Ovary (tissue), 10 donors: ENCODE measurements at regions of chr6 and their contacts with region 1.

Region 1: GRCh38 chr6:134640975-134641429 is 308.9 kb downstream of the ALDH8A1 start:
- DNase-seq: peak; percentile 66 to 87 (median 77)
- H3K4me3 ChIP-seq: no peak overlapping the region
- H3K27ac ChIP-seq: no peak overlapping the region
- H3K4me1 ChIP-seq: peaks cover 3% of the 10 kb centered on the region
- H3K27me3 ChIP-seq: no peaks in the 10 kb centered on the region
- CTCF ChIP-seq: peak; percentile 73 to 93 (median 84)
- EP300 ChIP-seq: no peak
- POLR2A ChIP-seq: no peak

Region 2: DNA sequence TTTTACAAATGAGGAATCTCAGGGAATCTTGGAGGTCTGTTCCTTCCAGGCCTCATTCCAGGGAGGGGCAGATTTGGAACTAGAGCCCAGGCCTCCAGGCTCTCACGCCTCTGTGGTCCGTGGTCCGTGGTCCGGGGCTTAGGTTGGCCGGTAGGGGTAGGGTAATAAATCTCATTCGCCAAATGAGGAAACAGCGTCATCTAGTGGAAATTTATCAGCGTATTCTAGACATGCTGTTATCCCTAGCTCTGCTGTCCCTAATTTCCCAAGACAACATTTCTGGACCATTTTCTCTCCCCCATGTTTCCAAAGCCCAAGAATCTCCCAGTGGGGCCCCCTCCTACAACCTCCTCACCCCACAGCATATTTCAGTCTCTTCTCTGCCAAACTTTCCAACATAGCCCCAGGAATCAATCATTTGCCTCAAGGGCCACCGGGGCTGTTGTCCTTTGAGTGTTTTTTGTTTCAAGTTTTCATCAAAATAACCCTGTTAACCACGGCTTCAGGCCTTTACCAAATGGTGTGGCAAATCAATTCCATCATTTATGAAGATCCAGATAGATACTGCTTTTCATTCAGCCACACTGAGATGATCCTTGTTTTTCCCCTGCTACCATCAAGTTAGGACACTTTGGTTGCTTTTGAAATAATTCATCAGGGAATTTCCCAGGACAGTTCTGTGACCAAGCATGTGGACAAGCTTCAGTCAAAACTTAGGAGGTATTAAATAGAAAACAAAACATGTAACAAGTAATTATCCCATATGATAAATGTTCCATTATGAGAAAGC is 182.1 kb after region 1 on chr6:
- intact Hi-C with region 1: loop called in 1 of 4 experiments (anchors 10 kb)
- DNase-seq: peak; percentile 42 to 58 (median 47)
- H3K4me3 ChIP-seq: no peak overlapping the region
- H3K27ac ChIP-seq: peak overlapping the region in 1 of 2 donors; percentile 26
- H3K4me1 ChIP-seq: peaks cover 10% of the 10 kb centered on the region
- H3K27me3 ChIP-seq: no peaks in the 10 kb centered on the region
- CTCF ChIP-seq: peak; percentile 73 to 95 (median 92)
- EP300 ChIP-seq: no peak
- POLR2A ChIP-seq: no peak